ENCODE measurements at regions of chr3 and their contacts with region 1.

Region 1: DNA sequence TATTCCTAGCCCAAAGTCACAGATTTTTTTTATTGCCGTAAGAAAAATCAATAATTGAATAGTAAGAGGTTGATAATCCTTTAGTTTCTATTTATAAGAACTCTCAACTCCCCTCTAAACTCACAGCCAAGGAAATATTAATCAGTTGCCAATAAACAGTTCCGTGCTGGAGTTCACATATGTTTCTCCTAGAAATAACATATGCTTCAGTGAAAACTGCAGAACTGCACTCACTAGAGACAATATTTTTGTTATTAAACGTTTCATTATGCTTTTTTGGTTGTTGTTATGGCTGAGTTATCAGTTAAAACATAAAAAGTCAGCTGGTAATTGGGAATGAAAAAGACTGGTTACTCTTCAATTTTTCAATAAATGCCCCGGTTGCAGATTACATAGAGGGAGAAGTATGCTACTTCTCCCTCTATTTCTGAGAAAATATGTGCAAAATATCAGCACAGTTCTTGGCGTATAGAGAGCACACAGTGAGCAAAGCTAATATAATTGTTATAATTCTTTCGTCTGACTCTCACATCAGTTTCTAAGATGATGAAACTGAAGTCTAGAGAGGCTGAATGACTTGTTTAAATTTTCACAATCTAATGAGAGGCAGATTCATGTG is 781.2 kb upstream of the GRM7 start:
- DNase-seq: no peak
- ATAC-seq: no peak
- H3K4me3 ChIP-seq: no peak overlapping the region
- H3K4me3 Mint-ChIP-seq: no peak overlapping the region
- H3K27ac ChIP-seq: no peak overlapping the region
- H3K27ac Mint-ChIP-seq: no peak overlapping the region
- H3K4me1 ChIP-seq: no peaks in the 10 kb centered on the region
- H3K4me1 Mint-ChIP-seq: no peaks in the 10 kb centered on the region
- H3K27me3 ChIP-seq: no peaks in the 10 kb centered on the region
- H3K27me3 Mint-ChIP-seq: no peaks in the 10 kb centered on the region
- CTCF ChIP-seq: no peak

Region 2: GRCh38 chr3:6039971-6040370 is 39.7 kb before region 1 on chr3:
- intact Hi-C with region 1: loop called (anchors 1 kb)
- DNase-seq: no peak
- ATAC-seq: no peak
- H3K4me3 ChIP-seq: no peak overlapping the region
- H3K4me3 Mint-ChIP-seq: no peak overlapping the region
- H3K27ac ChIP-seq: no peak overlapping the region
- H3K27ac Mint-ChIP-seq: no peak overlapping the region
- H3K4me1 ChIP-seq: no peaks in the 10 kb centered on the region
- H3K4me1 Mint-ChIP-seq: no peaks in the 10 kb centered on the region
- H3K27me3 ChIP-seq: no peaks in the 10 kb centered on the region
- H3K27me3 Mint-ChIP-seq: no peaks in the 10 kb centered on the region
- CTCF ChIP-seq: no peak

Region 3: GRCh38 chr3:6601374-6601773 is 521.7 kb after region 1 on chr3:
- intact Hi-C with region 1: no loop called
- DNase-seq: no peak
- ATAC-seq: no peak
- H3K4me3 ChIP-seq: no peak overlapping the region
- H3K4me3 Mint-ChIP-seq: no peak overlapping the region
- H3K27ac ChIP-seq: no peak overlapping the region
- H3K27ac Mint-ChIP-seq: no peak overlapping the region
- H3K4me1 ChIP-seq: no peaks in the 10 kb centered on the region
- H3K4me1 Mint-ChIP-seq: no peaks in the 10 kb centered on the region
- H3K27me3 ChIP-seq: no peaks in the 10 kb centered on the region
- H3K27me3 Mint-ChIP-seq: no peaks in the 10 kb centered on the region
- CTCF ChIP-seq: no peak

Measured in natural killer cell (primary cell).